ENCODE measurements at regions of chr10 and their contacts with region 1.

Region 1: DNA sequence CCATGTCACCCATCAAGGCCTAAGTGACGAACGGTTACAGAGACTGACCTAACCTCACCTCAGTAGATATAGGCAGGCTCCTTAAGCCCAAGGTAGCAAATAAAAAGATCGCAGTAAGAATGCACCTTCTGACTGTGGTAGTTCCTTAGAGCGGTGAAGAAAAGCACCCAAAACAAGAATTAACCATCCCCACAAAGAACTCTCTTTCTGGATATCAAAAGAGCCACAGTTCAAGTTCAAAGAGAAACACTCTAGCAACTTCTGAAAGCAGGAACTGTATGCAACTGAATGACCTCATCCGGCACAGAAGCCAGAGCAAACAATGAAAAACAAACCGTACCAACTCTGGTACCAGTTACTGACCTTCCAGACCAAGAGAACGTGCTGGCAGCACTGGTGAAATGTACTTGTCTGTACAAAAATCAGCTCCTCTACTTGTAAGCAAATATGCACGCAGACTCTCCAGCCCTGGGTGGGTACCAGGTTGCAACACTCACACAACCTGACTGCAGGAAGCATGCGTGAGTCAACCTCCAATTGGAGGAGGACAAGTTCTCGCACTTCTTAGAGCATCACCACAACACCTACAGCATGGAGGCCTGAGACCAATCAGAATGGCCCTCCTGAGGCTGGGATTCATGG is 202.7 kb downstream of the FAM107B start:
- DNase-seq: peak; percentile 80
- ATAC-seq: peak; percentile 78
- H3K4me3 Mint-ChIP-seq: peak overlapping the region; percentile 73
- H3K27ac Mint-ChIP-seq: peak overlapping the region; percentile 94
- H3K4me1 Mint-ChIP-seq: peaks cover 79% of the 10 kb centered on the region
- H3K27me3 Mint-ChIP-seq: no peaks in the 10 kb centered on the region

Region 2: GRCh38 chr10:14371581-14371980 is 200.4 kb before region 1 on chr10:
- CTCF ChIA-PET with region 1: no interaction called
- DNase-seq: no peak
- ATAC-seq: no peak
- H3K4me3 Mint-ChIP-seq: no peak overlapping the region
- H3K27ac Mint-ChIP-seq: no peak overlapping the region
- H3K4me1 Mint-ChIP-seq: no peaks in the 10 kb centered on the region
- H3K27me3 Mint-ChIP-seq: peaks cover 38% of the 10 kb centered on the region

Region 3: GRCh38 chr10:14583252-14583651 is 11.3 kb after region 1 on chr10:
- CTCF ChIA-PET with region 1: interaction called, 10 read pairs
- DNase-seq: peak; percentile 88
- ATAC-seq: peak; percentile 54
- H3K4me3 Mint-ChIP-seq: peak overlapping the region; percentile 51
- H3K27ac Mint-ChIP-seq: peak overlapping the region; percentile 81
- H3K4me1 Mint-ChIP-seq: peaks cover 78% of the 10 kb centered on the region
- H3K27me3 Mint-ChIP-seq: no peaks in the 10 kb centered on the region

Region 4: GRCh38 chr10:14648005-14648765 is 76.2 kb after region 1 on chr10:
- CTCF ChIA-PET with region 1: no interaction called
- DNase-seq: peak; percentile 84
- ATAC-seq: peak; percentile 91
- H3K4me3 Mint-ChIP-seq: peak overlapping the region; percentile 72
- H3K27ac Mint-ChIP-seq: peak overlapping the region; percentile 92
- H3K4me1 Mint-ChIP-seq: peaks cover 47% of the 10 kb centered on the region
- H3K27me3 Mint-ChIP-seq: no peaks in the 10 kb centered on the region